ENCODE measurements at regions of chr3 and their contacts with region 1.

Region 1: GRCh38 chr3:126134219-126134975 is 46.0 kb downstream of the ALDH1L1 start:
- DNase-seq: peak in 3 of 5 donors; percentile 22 to 36 (median 24)
- H3K4me3 ChIP-seq: no peak overlapping the region
- H3K4me3 Mint-ChIP-seq: no peak overlapping the region
- H3K27ac ChIP-seq: no peak overlapping the region
- H3K27ac Mint-ChIP-seq: peak overlapping the region in 1 of 7 donors; percentile 48
- H3K4me1 ChIP-seq: no peaks in the 10 kb centered on the region
- H3K4me1 Mint-ChIP-seq: no peaks in the 10 kb centered on the region
- H3K27me3 ChIP-seq: peaks cover 7% of the 10 kb centered on the region
- H3K27me3 Mint-ChIP-seq: peaks cover 13 to 14% of the 10 kb centered on the region in 2 donors

Region 2: GRCh38 chr3:126070146-126070545 is 64.3 kb before region 1 on chr3:
- CTCF ChIA-PET with region 1: no interaction called
- POLR2A ChIA-PET with region 1: no interaction called
- intact Hi-C with region 1: no loop called
- DNase-seq: no peak
- H3K4me3 ChIP-seq: no peak overlapping the region
- H3K4me3 Mint-ChIP-seq: no peak overlapping the region
- H3K27ac ChIP-seq: no peak overlapping the region
- H3K27ac Mint-ChIP-seq: no peak overlapping the region
- H3K4me1 ChIP-seq: no peaks in the 10 kb centered on the region
- H3K4me1 Mint-ChIP-seq: peaks cover 0 to 9% (median 5%) of the 10 kb centered on the region in 4 donors
- H3K27me3 ChIP-seq: no peaks in the 10 kb centered on the region
- H3K27me3 Mint-ChIP-seq: no peaks in the 10 kb centered on the region

Region 3: DNA sequence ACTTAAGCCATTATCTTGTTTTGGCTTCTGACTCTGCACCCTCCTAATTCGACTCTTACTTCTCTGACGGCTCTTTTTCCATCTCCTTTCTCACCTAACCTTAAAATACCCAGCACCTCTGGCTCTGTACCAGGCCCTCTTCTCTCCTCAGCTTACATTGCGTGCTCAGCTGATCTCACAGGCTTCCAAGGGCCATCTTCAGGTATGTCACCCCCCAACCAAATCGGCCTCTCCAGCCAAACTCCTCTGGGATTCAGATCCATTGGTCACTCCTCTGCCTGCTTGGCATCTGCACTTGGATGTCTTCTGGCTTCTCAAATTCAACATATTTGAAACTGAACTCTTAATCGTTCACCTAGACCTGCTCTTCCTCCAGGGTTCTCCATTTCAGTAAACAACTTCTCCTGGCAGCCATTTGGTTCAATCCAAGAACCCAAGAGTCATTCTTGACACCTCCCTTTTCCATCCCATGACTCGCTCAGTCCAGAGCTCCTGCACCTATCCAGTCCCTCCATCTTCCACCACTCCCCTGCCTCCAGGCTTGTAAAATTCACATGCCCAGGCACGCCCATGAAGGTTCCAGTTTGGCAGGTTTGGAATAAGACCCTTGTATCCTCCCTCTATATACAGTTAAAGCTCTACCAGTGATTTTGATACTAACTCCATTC is 15.3 kb before region 1 on chr3:
- CTCF ChIA-PET with region 1: interaction called, 14 read pairs
- POLR2A ChIA-PET with region 1: no interaction called
- intact Hi-C with region 1: no loop called
- DNase-seq: no peak
- H3K4me3 ChIP-seq: no peak overlapping the region
- H3K4me3 Mint-ChIP-seq: no peak overlapping the region
- H3K27ac ChIP-seq: no peak overlapping the region
- H3K27ac Mint-ChIP-seq: no peak overlapping the region
- H3K4me1 ChIP-seq: no peaks in the 10 kb centered on the region
- H3K4me1 Mint-ChIP-seq: no peaks in the 10 kb centered on the region
- H3K27me3 ChIP-seq: no peaks in the 10 kb centered on the region
- H3K27me3 Mint-ChIP-seq: peaks cover 0 to 4% of the 10 kb centered on the region in 2 donors

Region 4: DNA sequence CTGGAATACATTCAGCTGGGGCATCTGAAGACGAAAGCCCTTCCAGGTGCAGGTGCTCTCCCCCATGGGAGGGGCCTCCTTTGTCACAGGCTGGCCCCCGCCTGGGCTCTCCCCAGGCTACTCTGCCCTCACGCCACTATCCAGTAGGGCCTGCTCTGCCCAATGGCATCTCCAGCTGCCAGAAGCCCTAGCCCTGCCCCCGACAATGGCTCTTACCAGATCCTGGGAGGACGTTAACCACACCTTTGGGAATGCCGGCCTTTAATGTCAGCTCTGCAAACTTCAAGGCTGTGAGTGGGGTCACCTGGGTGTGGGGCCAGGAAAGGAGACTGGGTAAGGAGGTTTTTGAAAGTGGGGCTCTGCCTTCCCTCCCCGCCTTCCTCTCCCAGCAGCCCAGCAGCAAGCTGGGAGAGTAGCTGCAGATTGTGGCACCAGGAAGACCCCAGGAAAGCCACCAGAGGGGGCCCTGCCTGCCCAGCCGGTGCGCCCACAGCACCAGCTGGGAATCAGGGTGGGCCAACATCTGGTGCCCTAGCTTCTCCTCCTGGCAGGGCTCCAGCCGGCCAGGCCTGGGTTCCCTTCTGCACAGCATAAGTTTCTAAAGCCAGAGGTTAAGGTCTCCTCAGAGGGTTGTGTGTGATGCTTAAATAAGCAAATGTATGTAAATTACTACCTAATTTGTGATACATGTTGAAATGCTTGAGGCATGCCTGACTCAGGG is 10.1 kb before region 1 on chr3:
- CTCF ChIA-PET with region 1: interaction called, 11 read pairs
- POLR2A ChIA-PET with region 1: no interaction called
- intact Hi-C with region 1: no loop called
- DNase-seq: no peak
- H3K4me3 ChIP-seq: no peak overlapping the region
- H3K4me3 Mint-ChIP-seq: no peak overlapping the region
- H3K27ac ChIP-seq: no peak overlapping the region
- H3K27ac Mint-ChIP-seq: no peak overlapping the region
- H3K4me1 ChIP-seq: no peaks in the 10 kb centered on the region
- H3K4me1 Mint-ChIP-seq: no peaks in the 10 kb centered on the region
- H3K27me3 ChIP-seq: no peaks in the 10 kb centered on the region
- H3K27me3 Mint-ChIP-seq: peaks cover 0 to 4% of the 10 kb centered on the region in 2 donors

Region 5: GRCh38 chr3:126149960-126150515 is 15.6 kb after region 1 on chr3:
- CTCF ChIA-PET with region 1: interaction called, 10 read pairs
- POLR2A ChIA-PET with region 1: no interaction called
- intact Hi-C with region 1: no loop called
- DNase-seq: no peak
- H3K4me3 ChIP-seq: no peak overlapping the region
- H3K4me3 Mint-ChIP-seq: no peak overlapping the region
- H3K27ac ChIP-seq: no peak overlapping the region
- H3K27ac Mint-ChIP-seq: no peak overlapping the region
- H3K4me1 ChIP-seq: no peaks in the 10 kb centered on the region
- H3K4me1 Mint-ChIP-seq: no peaks in the 10 kb centered on the region
- H3K27me3 ChIP-seq: no peaks in the 10 kb centered on the region
- H3K27me3 Mint-ChIP-seq: peaks cover 0 to 1% of the 10 kb centered on the region in 2 donors

Region 6: GRCh38 chr3:126270145-126270811 is 135.9 kb after region 1 on chr3:
- CTCF ChIA-PET with region 1: no interaction called
- POLR2A ChIA-PET with region 1: no interaction called
- intact Hi-C with region 1: no loop called
- DNase-seq: no peak
- H3K4me3 ChIP-seq: no peak overlapping the region
- H3K4me3 Mint-ChIP-seq: no peak overlapping the region
- H3K27ac ChIP-seq: no peak overlapping the region
- H3K27ac Mint-ChIP-seq: no peak overlapping the region
- H3K4me1 ChIP-seq: no peaks in the 10 kb centered on the region
- H3K4me1 Mint-ChIP-seq: peaks cover 0 to 8% (median 1%) of the 10 kb centered on the region in 4 donors
- H3K27me3 ChIP-seq: no peaks in the 10 kb centered on the region
- H3K27me3 Mint-ChIP-seq: peaks cover 10% of the 10 kb centered on the region in 2 donors

Measured in CD4-positive, alpha-beta memory T cell (primary cell).